ENCODE measurements at regions of chr7 and their contacts with region 1.

Region 1: DNA sequence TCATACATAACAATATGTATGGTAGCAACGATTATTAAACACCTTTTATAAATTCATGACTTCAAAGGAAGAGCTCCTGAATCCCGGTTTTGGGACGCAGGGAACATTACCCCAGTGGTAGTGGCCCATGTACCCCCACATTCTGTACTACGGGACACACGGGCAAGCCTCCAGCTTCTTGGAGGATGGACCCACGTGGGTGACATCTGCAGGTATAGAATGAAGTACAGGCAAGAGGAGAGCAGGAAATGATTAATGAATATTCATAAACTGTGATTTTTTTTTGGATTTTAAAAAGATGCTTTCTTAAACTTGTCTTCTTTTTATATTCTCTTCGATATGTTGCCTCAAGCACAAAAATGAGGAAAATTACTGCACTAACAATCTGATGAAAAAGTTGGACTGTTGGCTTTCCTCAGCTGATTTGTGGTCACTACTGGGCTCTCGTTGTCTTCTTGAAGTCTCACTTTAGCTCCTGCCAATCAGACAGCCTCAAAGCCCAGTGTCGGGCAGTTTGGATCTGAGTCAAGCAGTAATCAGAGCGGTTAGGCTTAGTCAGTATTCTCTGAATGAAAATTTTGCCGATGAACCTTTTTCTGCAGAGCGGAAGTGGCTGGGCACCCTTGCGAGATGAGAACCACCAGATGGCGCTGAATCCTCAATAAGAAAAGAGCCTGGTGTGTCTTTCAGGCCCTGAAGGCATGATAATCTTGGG is 157.7 kb upstream of the CDCA7L start:
- ATAC-seq: peak; percentile 55 to 98 (median 78)
- H3K4me3 ChIP-seq: no peak overlapping the region
- H3K27ac ChIP-seq: no peak overlapping the region
- H3K4me1 ChIP-seq: no peaks in the 10 kb centered on the region

Region 2: GRCh38 chr7:22255834-22256233 is 152.4 kb after region 1 on chr7:
- in situ Hi-C with region 1: loop called in 1 of 9 experiments (anchors 25 kb)
- ATAC-seq: peak in 3 of 8 experiments; percentile 14 to 32 (median 14)
- H3K4me3 ChIP-seq: no peak overlapping the region
- H3K27ac ChIP-seq: no peak overlapping the region
- H3K4me1 ChIP-seq: peaks cover 23 to 35% of the 10 kb centered on the region in 2 donors

Region 3: GRCh38 chr7:22295402-22296264 is 192.2 kb after region 1 on chr7:
- in situ Hi-C with region 1: loop called in 1 of 9 experiments (anchors 25 kb)
- ATAC-seq: peak in 3 of 8 experiments; percentile 57 to 83 (median 71)
- H3K4me3 ChIP-seq: no peak overlapping the region
- H3K27ac ChIP-seq: no peak overlapping the region
- H3K4me1 ChIP-seq: peaks cover 18 to 19% of the 10 kb centered on the region in 2 donors